Caco-2 (cell line): ENCODE measurements at regions of chr13 and their contacts with region 1.

Region 1: DNA sequence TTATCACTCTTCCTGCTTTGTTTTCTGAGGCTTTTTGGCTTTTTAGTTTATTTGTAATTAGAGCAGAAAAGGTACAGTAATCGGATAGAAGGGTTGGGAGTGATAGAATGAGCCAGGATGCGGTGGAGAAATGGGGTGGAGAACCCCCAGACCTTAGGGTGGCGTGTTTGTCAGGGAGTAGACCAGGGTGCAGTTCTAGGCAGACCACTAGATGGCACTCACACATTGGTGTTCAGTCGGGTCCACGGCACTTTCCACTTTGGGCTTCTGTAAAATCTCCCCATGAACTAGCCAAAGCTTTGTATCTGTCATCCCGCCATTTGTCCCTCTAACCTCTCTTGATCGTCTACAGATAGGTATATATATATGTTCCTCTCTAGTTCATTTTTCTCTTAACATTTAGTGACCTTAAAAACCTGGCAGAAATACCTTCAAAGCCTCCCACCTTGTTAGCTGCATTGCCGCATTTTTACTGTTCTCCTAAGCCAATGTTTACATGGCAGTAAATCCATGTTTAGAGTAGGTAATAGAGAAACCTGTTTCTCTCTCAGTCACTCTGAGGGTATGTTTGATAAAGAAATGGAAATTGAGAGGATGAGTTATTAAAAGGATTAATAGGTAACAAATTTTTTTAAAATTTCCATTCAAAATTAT is 154.9 kb downstream of the TM9SF2 start:
- DNase-seq: peak; percentile 80 to 85
- H3K4me3 ChIP-seq: 0 out of 2 replicates have a peak overlapping the region, but pooled peaks have one; percentile 12
- H3K4me3 Mint-ChIP-seq: peak overlapping the region; percentile 67
- H3K27ac Mint-ChIP-seq: no peak overlapping the region
- H3K4me1 ChIP-seq: no peaks in the 10 kb centered on the region
- H3K4me1 Mint-ChIP-seq: peaks cover 10% of the 10 kb centered on the region
- H3K27me3 ChIP-seq: no peaks in the 10 kb centered on the region
- H3K27me3 Mint-ChIP-seq: no peaks in the 10 kb centered on the region
- CTCF ChIP-seq: peak; percentile 92

Region 2: DNA sequence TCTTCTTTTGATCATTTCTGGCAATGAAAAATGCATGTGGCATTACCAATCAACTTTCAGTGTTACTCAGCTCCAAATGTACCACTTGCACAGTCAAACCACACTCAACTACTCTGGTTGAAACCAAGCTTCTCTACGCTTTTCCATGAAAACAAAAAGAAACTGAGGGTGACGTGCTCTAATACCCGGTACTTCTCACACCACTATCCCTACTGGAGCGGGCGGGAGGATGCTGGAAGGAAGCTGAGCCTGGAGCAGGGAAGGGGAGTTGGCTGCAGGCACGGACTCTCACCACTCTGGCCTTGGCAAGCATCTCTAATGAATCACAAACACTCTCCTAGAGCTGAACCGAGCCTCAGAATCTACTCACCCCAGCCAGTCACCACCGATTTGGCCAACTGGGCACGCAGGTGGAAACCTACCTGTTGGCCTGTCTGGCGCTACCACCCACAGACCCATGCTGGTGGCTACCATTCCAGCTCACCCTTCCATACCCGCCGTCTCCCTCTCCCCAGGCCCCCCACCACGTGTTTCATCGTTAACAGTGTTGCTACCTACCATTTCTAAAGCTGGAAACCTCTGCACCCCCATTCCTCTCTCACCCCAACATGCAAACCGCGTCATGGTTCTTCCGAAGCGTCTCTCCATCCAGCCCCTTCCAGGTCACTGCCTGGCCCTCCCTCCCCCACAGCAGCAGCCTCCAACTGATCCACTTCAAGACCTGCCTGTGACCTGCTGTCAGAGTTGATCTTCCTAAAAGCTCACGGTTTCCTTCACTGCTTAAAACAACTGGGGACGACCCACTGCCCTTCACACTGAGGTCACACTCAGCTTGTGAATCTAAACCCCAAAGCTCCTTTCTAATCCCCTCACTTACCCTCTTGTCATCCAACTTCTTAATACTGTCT is 1127.3 kb before region 1 on chr13:
- CTCF ChIA-PET with region 1: no interaction called
- POLR2A ChIA-PET with region 1: no interaction called
- intact Hi-C with region 1: no loop called
- DNase-seq: no peak
- H3K4me3 ChIP-seq: no peak overlapping the region
- H3K4me3 Mint-ChIP-seq: no peak overlapping the region
- H3K27ac Mint-ChIP-seq: peak overlapping the region; percentile 15
- H3K4me1 ChIP-seq: no peaks in the 10 kb centered on the region
- H3K4me1 Mint-ChIP-seq: peaks cover 28% of the 10 kb centered on the region
- H3K27me3 ChIP-seq: no peaks in the 10 kb centered on the region
- H3K27me3 Mint-ChIP-seq: no peaks in the 10 kb centered on the region
- CTCF ChIP-seq: no peak

Region 3: GRCh38 chr13:99281811-99282263 is 374.4 kb before region 1 on chr13:
- CTCF ChIA-PET with region 1: no interaction called
- POLR2A ChIA-PET with region 1: no interaction called
- intact Hi-C with region 1: no loop called
- DNase-seq: no peak
- H3K4me3 ChIP-seq: no peak overlapping the region
- H3K4me3 Mint-ChIP-seq: no peak overlapping the region
- H3K27ac Mint-ChIP-seq: no peak overlapping the region
- H3K4me1 ChIP-seq: no peaks in the 10 kb centered on the region
- H3K4me1 Mint-ChIP-seq: no peaks in the 10 kb centered on the region
- H3K27me3 ChIP-seq: no peaks in the 10 kb centered on the region
- H3K27me3 Mint-ChIP-seq: no peaks in the 10 kb centered on the region
- CTCF ChIP-seq: no peak

Region 4: DNA sequence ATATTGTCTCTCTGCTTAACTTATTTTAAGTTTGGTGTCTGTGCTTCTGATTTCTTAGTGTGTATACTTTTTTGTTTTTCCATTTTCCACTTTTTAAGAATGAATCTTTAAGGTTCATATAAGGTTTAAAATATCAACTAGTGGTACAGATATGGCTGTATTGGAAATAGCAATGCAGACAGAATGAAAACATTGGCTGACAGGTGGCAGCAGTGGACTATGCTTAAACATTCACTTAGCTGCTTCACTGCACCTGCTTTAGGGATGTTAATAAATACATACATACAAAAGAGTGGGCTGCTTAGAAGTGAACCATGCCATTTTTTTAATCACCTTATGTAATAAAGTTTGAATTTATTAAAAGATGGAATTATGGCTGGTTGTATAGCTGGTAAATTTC is 127.7 kb before region 1 on chr13:
- CTCF ChIA-PET with region 1: no interaction called
- POLR2A ChIA-PET with region 1: no interaction called
- intact Hi-C with region 1: loop called (anchors 2 kb)
- DNase-seq: peak in 1 of 2 experiments; percentile 46
- H3K4me3 ChIP-seq: no peak overlapping the region
- H3K4me3 Mint-ChIP-seq: no peak overlapping the region
- H3K27ac Mint-ChIP-seq: no peak overlapping the region
- H3K4me1 ChIP-seq: no peaks in the 10 kb centered on the region
- H3K4me1 Mint-ChIP-seq: no peaks in the 10 kb centered on the region
- H3K27me3 ChIP-seq: no peaks in the 10 kb centered on the region
- H3K27me3 Mint-ChIP-seq: no peaks in the 10 kb centered on the region
- CTCF ChIP-seq: peak; percentile 45 to 53

Region 5: GRCh38 chr13:99900960-99901359 is 244.7 kb after region 1 on chr13:
- CTCF ChIA-PET with region 1: no interaction called
- POLR2A ChIA-PET with region 1: no interaction called
- intact Hi-C with region 1: loop called (anchors 5 kb)
- DNase-seq: no peak
- H3K4me3 ChIP-seq: no peak overlapping the region
- H3K4me3 Mint-ChIP-seq: no peak overlapping the region
- H3K27ac Mint-ChIP-seq: no peak overlapping the region
- H3K4me1 ChIP-seq: no peaks in the 10 kb centered on the region
- H3K4me1 Mint-ChIP-seq: no peaks in the 10 kb centered on the region
- H3K27me3 ChIP-seq: no peaks in the 10 kb centered on the region
- H3K27me3 Mint-ChIP-seq: peaks cover 4% of the 10 kb centered on the region
- CTCF ChIP-seq: no peak

Region 6: DNA sequence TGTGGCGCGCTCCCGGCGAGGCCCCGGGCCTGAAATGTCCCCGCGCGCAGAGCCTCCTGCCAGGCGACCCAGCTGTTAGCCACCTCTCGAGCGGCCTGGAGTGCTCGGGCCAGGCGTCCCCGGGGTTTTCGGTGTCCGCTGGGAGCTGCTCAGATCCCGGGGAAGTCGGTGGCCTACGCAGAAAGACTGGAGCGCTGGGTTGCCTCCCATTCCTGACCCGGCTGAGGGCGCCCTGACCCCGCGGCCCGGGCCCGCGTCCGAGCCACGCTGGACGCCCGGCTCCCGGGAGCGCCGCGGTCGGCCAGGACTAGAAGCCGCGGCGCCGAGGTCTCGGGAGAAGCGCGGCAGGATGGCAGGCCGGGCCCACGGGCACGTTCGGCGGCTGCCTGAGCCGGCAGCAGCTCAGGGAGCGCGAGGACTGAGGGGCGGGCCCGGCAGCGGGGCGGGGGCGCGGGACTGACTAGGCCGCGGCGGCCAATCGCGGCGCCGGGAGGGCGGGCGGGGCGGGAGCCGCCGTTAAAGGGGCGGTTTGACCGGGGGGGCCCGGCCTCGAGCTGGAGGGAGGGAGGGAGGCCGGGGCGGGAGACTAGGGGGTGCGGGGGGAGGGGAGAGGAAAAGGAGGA is 324.1 kb after region 1 on chr13:
- CTCF ChIA-PET with region 1: no interaction called
- POLR2A ChIA-PET with region 1: no interaction called
- intact Hi-C with region 1: loop called (anchors 5 kb)
- DNase-seq: peak; percentile 70 to 80
- H3K4me3 ChIP-seq: peak overlapping the region; percentile 59
- H3K4me3 Mint-ChIP-seq: peak overlapping the region; percentile 61
- H3K27ac Mint-ChIP-seq: no peak overlapping the region
- H3K4me1 ChIP-seq: peaks cover 24% of the 10 kb centered on the region
- H3K4me1 Mint-ChIP-seq: peaks cover 9% of the 10 kb centered on the region
- H3K27me3 ChIP-seq: peaks cover 16% of the 10 kb centered on the region
- H3K27me3 Mint-ChIP-seq: peaks cover 36% of the 10 kb centered on the region
- CTCF ChIP-seq: peak in 1 of 2 experiments; percentile 24

Region 7: GRCh38 chr13:100514788-100515409 is 858.7 kb after region 1 on chr13:
- CTCF ChIA-PET with region 1: no interaction called
- POLR2A ChIA-PET with region 1: no interaction called
- intact Hi-C with region 1: loop called (anchors 1 kb)
- DNase-seq: peak; percentile 76 to 82
- H3K4me3 ChIP-seq: no peak overlapping the region
- H3K4me3 Mint-ChIP-seq: no peak overlapping the region
- H3K27ac Mint-ChIP-seq: no peak overlapping the region
- H3K4me1 ChIP-seq: peaks cover 12% of the 10 kb centered on the region; the same call in 1 of the 2 replicates
- H3K4me1 Mint-ChIP-seq: peaks cover 7% of the 10 kb centered on the region
- H3K27me3 ChIP-seq: no peaks in the 10 kb centered on the region
- H3K27me3 Mint-ChIP-seq: no peaks in the 10 kb centered on the region
- CTCF ChIP-seq: peak; percentile 92 to 96

Region 8: GRCh38 chr13:101109005-101109404 is 1452.8 kb after region 1 on chr13:
- CTCF ChIA-PET with region 1: no interaction called
- POLR2A ChIA-PET with region 1: no interaction called
- intact Hi-C with region 1: loop called (anchors 10 kb)
- DNase-seq: no peak
- H3K4me3 ChIP-seq: no peak overlapping the region
- H3K4me3 Mint-ChIP-seq: no peak overlapping the region
- H3K27ac Mint-ChIP-seq: no peak overlapping the region
- H3K4me1 ChIP-seq: no peaks in the 10 kb centered on the region
- H3K4me1 Mint-ChIP-seq: no peaks in the 10 kb centered on the region
- H3K27me3 ChIP-seq: no peaks in the 10 kb centered on the region
- H3K27me3 Mint-ChIP-seq: no peaks in the 10 kb centered on the region
- CTCF ChIP-seq: no peak